Activated CD4-positive, alpha-beta T cell treated with anti-CD3 and anti-CD28 coated beads, Interleukin-2, amount 10 ng/mL, durations not matched to agents 24 days and 14 days (primary cell): ENCODE measurements at regions of chr4 and their contacts with region 1.

Region 1: GRCh38 chr4:122710434-122711308 is 21.8 kb upstream of the BBS12 start:
- DNase-seq: peak; percentile 80
- H3K4me3 Mint-ChIP-seq: peak overlapping the region; percentile 84
- H3K27ac Mint-ChIP-seq: peak overlapping the region; percentile 98
- H3K4me1 Mint-ChIP-seq: peaks cover 64% of the 10 kb centered on the region
- H3K27me3 Mint-ChIP-seq: no peaks in the 10 kb centered on the region

Region 2: GRCh38 chr4:122508083-122508482 is 202.6 kb before region 1 on chr4:
- intact Hi-C with region 1: loop called (anchors 2 kb)
- DNase-seq: peak; percentile 70
- H3K4me3 Mint-ChIP-seq: peak overlapping the region; percentile 65
- H3K27ac Mint-ChIP-seq: peak overlapping the region; percentile 82
- H3K4me1 Mint-ChIP-seq: peaks cover 55% of the 10 kb centered on the region
- H3K27me3 Mint-ChIP-seq: no peaks in the 10 kb centered on the region

Region 3: DNA sequence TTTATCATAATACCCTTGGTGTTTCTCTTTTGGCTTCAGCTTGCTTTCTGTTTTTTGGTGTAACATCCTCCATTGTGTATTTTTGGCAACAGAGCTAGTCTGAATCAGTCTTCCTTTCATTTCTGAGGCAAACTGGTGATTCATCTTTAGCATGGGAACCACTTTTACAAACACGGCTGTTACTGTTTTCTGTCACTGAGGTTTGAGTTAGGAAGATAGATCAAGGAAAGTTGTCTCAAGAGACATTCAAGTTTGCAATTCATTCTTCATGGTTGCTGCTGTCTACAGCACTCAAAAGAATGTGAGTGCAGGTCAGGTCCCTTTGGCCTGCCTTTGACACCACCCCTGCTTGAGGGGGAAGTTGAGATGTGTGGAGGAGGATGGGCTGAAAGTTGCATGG is 126.2 kb before region 1 on chr4:
- intact Hi-C with region 1: loop called (anchors 1 kb)
- DNase-seq: peak; percentile 81
- H3K4me3 Mint-ChIP-seq: peak overlapping the region; percentile 64
- H3K27ac Mint-ChIP-seq: peak overlapping the region; percentile 95
- H3K4me1 Mint-ChIP-seq: peaks cover 53% of the 10 kb centered on the region
- H3K27me3 Mint-ChIP-seq: no peaks in the 10 kb centered on the region

Region 4: DNA sequence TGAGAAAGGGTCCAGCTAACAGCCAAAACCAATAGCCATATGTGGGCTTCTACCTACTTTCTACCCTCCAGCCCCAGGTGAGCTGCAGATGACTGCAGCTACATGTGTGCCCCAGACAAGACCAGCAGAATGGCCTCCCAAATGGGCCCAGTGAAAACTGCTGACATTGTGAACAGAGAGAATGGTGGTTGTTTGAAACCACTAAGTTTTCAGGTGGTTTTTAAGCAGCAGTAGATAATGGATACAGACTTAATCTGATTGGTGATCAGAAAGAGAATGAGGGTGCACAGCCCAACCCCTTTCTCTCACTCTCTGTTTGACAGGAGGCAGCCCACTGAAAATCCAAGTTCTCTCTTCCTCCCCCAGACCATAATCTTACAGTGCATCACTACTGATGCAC is 20.7 kb before region 1 on chr4:
- intact Hi-C with region 1: loop called (anchors 1 kb)
- DNase-seq: peak; percentile 80
- H3K4me3 Mint-ChIP-seq: peak overlapping the region; percentile 13
- H3K27ac Mint-ChIP-seq: peak overlapping the region; percentile 95
- H3K4me1 Mint-ChIP-seq: peaks cover 52% of the 10 kb centered on the region
- H3K27me3 Mint-ChIP-seq: no peaks in the 10 kb centered on the region

Region 5: DNA sequence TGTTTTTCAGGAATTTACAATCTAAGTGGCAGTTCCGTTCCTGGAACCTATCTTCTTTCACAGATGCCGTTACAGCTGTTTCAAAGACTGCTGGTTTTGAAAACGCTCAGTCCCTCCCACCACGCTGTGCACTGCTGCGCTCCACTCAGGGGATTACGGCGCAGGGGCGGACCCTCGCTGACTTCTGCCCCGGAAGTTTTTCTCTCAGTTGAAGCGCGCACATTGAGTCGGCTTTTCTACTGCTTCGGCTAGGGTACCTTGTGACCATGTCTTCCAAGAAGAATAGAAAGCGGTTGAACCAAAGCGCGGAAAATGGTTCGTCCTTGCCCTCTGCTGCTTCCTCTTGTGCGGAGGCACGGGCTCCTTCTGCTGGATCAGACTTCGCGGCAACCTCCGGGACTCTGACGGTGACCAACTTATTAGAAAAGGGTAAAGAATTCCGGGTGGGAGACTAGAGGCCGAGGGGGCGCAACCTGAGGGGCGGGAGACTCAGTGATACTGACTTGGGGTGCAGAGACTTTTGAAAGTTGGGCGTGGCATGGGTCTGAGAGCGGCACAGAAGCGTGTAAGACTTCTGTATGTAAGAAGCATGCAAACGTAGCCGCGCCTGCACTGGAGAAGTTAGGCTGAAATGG is 212.3 kb after region 1 on chr4:
- intact Hi-C with region 1: loop called (anchors 2 kb)
- DNase-seq: peak; percentile 97
- H3K4me3 Mint-ChIP-seq: no peak overlapping the region
- H3K27ac Mint-ChIP-seq: peak overlapping the region; percentile 96
- H3K4me1 Mint-ChIP-seq: peaks cover 24% of the 10 kb centered on the region
- H3K27me3 Mint-ChIP-seq: no peaks in the 10 kb centered on the region